ENCODE measurements at regions of chr20 and their contacts with region 1.

Region 1: DNA sequence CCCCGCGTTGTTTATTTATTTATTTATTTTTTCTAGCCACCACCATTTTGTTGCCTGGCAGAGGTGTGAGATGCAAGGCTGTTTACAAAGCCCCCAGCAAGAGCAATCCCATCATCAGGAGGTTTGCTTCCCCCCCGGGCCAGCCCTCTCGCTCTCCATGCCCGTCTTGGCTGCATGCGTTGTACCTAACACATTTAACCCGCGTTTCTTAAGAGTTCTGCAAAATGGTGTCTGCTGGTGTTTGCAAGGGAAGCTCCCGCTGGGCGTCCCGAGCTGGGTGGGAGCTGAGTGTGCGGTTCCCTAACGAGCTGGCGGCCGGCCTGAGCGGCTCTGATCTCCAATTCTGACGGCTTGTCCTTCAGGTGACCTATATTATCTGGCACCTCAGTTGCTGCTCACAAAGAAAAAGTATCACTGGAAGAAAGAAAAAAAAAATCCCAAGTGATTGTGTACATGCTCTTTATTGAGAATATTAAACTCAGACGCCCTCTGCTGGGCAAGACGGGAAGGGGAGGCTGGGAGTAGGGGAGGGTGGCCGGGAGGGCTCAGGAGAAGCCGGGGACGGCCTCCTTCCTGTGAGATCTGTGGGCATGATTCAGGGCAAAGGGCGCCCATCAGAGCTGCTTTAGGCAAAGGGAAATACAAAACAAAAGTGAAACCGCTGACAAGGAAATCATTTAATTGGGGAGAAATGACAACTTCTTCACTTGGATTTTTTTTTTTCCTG is 154.8 kb downstream of the BCAS1 start:
- DNase-seq: peak; percentile 86 to 94 (median 91)
- H3K4me3 ChIP-seq: peak overlapping the region; percentile 93
- H3K4me3 Mint-ChIP-seq: peak overlapping the region; percentile 92 to 99 (median 97)
- H3K27ac ChIP-seq: peak overlapping the region; percentile 69
- H3K27ac Mint-ChIP-seq: peak overlapping the region; percentile 81 to 97 (median 94)
- H3K4me1 ChIP-seq: peaks cover 21% of the 10 kb centered on the region
- H3K4me1 Mint-ChIP-seq: peaks cover 17 to 33% (median 31%) of the 10 kb centered on the region in 3 donors
- H3K27me3 ChIP-seq: no peaks in the 10 kb centered on the region
- H3K27me3 Mint-ChIP-seq: no peaks in the 10 kb centered on the region

Region 2: GRCh38 chr20:53578492-53579222 is 337.0 kb before region 1 on chr20:
- CTCF ChIA-PET with region 1: interaction called, 83 read pairs
- POLR2A ChIA-PET with region 1: no interaction called
- DNase-seq: peak; percentile 31 to 82 (median 73)
- H3K4me3 ChIP-seq: peak overlapping the region; percentile 61
- H3K4me3 Mint-ChIP-seq: peak overlapping the region; percentile 84 to 98 (median 89)
- H3K27ac ChIP-seq: peak overlapping the region; percentile 68
- H3K27ac Mint-ChIP-seq: peak overlapping the region; percentile 75 to 96 (median 92)
- H3K4me1 ChIP-seq: peaks cover 86% of the 10 kb centered on the region
- H3K4me1 Mint-ChIP-seq: peaks cover 82 to 94% (median 84%) of the 10 kb centered on the region in 3 donors
- H3K27me3 ChIP-seq: no peaks in the 10 kb centered on the region
- H3K27me3 Mint-ChIP-seq: no peaks in the 10 kb centered on the region

Region 3: DNA sequence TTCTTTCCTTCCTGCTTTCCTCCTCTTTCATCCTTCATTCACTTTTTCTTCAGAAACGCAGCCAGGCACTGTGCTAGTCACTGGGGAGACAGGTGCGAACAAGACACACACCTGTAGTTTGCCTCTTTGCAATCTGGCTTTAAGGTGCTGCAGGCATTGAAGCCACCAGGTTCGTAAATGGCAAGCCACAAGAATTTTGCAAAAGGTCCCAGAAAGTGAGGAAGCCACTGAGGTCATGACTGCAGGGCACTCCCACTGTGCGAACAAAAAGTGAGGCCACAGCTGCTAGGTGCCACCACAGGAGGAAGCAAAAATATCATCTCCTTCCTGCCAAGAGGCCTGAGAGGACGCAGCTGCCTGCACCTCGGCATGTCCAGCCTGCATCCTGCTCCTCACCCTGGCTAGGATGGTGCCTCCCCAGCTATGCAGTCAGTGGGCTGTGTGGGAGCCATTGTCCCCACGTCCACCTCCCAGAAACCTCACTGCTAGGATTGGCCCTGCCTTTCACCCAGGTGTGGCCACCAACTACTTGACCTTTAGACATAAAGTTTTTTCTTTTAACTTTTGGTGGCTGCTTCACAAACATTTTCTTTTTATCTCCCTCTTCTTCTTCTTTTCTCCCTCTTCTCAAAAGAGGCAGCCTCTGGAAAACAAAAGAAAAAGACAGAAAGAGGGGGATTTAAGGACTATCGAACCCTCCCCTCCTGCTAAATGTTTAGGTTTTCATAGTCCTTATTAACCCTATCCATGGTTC is 76.0 kb before region 1 on chr20:
- CTCF ChIA-PET with region 1: interaction called, 10 read pairs
- POLR2A ChIA-PET with region 1: interaction called, 4 read pairs
- DNase-seq: peak; percentile 39 to 86 (median 75)
- H3K4me3 ChIP-seq: no peak overlapping the region
- H3K4me3 Mint-ChIP-seq: peak overlapping the region; percentile 28 to 89 (median 75)
- H3K27ac ChIP-seq: no peak overlapping the region
- H3K27ac Mint-ChIP-seq: peak overlapping the region; percentile 87 to 100 (median 97)
- H3K4me1 ChIP-seq: peaks cover 87% of the 10 kb centered on the region
- H3K4me1 Mint-ChIP-seq: peaks cover 68 to 86% (median 85%) of the 10 kb centered on the region in 3 donors
- H3K27me3 ChIP-seq: no peaks in the 10 kb centered on the region
- H3K27me3 Mint-ChIP-seq: no peaks in the 10 kb centered on the region

Region 4: GRCh38 chr20:53872561-53873229 is 42.9 kb before region 1 on chr20:
- CTCF ChIA-PET with region 1: interaction called, 20 read pairs
- POLR2A ChIA-PET with region 1: interaction called, 7 read pairs
- DNase-seq: peak; percentile 24 to 75 (median 74)
- H3K4me3 ChIP-seq: peak overlapping the region; percentile 59
- H3K4me3 Mint-ChIP-seq: peak overlapping the region; percentile 79 to 92 (median 88)
- H3K27ac ChIP-seq: peak overlapping the region; percentile 62
- H3K27ac Mint-ChIP-seq: peak overlapping the region; percentile 90 to 99 (median 97)
- H3K4me1 ChIP-seq: peaks cover 55% of the 10 kb centered on the region
- H3K4me1 Mint-ChIP-seq: peaks cover 48 to 73% (median 68%) of the 10 kb centered on the region in 3 donors
- H3K27me3 ChIP-seq: no peaks in the 10 kb centered on the region
- H3K27me3 Mint-ChIP-seq: peaks cover 0 to 4% of the 10 kb centered on the region in 2 donors

Region 5: GRCh38 chr20:53926428-53927028 is 10.9 kb after region 1 on chr20:
- CTCF ChIA-PET with region 1: interaction called, 10 read pairs
- POLR2A ChIA-PET with region 1: interaction called, 3 read pairs
- DNase-seq: no peak
- H3K4me3 ChIP-seq: no peak overlapping the region
- H3K4me3 Mint-ChIP-seq: no peak overlapping the region
- H3K27ac ChIP-seq: no peak overlapping the region
- H3K27ac Mint-ChIP-seq: peak overlapping the region in 2 of 8 donors; percentile 9 to 84
- H3K4me1 ChIP-seq: no peaks in the 10 kb centered on the region
- H3K4me1 Mint-ChIP-seq: peaks cover 16 to 28% (median 26%) of the 10 kb centered on the region in 3 donors
- H3K27me3 ChIP-seq: no peaks in the 10 kb centered on the region
- H3K27me3 Mint-ChIP-seq: no peaks in the 10 kb centered on the region

Region 6: DNA sequence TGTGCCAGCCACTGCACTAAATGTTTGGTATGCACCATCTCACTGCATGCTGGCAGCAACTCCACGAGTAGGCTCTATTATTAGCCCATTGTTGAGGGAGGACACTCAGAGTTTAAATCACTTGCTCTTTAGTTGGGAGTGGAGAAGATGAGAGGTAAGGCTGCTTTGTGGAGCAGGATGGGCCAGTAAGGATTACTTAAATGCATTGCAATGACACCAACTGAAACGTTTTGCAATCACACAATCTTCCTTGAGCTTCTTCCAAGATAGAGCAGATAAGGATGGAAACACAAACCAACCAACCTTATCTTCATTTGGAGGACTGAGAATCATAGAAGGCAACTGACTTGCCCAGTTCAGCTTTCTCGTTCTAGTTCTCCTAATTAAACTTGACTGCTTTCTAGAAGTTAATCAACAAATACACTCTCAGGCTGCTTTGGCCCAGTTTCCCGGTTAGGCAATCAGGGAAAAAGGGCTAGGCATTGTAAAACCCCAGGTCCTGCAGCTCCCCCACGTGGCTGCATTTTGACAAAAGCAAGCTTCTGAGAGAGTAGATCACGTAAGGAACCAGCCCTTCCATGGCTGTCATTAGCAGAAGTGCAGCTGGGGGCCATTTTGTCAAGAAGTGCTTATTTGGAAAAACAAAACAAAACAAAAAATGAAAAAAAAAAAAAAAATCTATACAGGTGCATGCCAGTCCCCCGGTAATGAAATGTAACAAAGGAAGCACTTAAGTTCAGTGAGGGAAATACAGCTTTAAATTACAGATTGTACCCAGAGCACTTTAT is 24.2 kb after region 1 on chr20:
- CTCF ChIA-PET with region 1: interaction called, 20 read pairs
- POLR2A ChIA-PET with region 1: no interaction called
- DNase-seq: peak; percentile 34 to 76 (median 53)
- H3K4me3 ChIP-seq: no peak overlapping the region
- H3K4me3 Mint-ChIP-seq: no peak overlapping the region
- H3K27ac ChIP-seq: no peak overlapping the region
- H3K27ac Mint-ChIP-seq: peak overlapping the region in 4 of 8 donors; percentile 29 to 44 (median 39)
- H3K4me1 ChIP-seq: peaks cover 16% of the 10 kb centered on the region
- H3K4me1 Mint-ChIP-seq: peaks cover 18 to 55% (median 43%) of the 10 kb centered on the region in 3 donors
- H3K27me3 ChIP-seq: no peaks in the 10 kb centered on the region
- H3K27me3 Mint-ChIP-seq: no peaks in the 10 kb centered on the region

Measured in CD8-positive, alpha-beta memory T cell (primary cell).